ENCODE measurements at regions of chr16 and their contacts with region 1.

Region 1: GRCh38 chr16:66406534-66407221 is 20.4 kb upstream of the BEAN1 start:
- DNase-seq: peak; percentile 64
- ATAC-seq: peak; percentile 87
- H3K4me3 ChIP-seq: peak overlapping the region; percentile 67 to 70
- H3K27ac ChIP-seq: peak overlapping the region; percentile 59
- H3K4me1 ChIP-seq: peaks cover 20 to 37% of the 10 kb centered on the region in 2 experiments
- H3K27me3 ChIP-seq: 0 out of 2 replicates have a peak, but pooled peaks cover 3% of the 10 kb centered on the region
- CTCF ChIP-seq: peak; percentile 71 to 93 (median 89)
- POLR2A ChIP-seq: peak; percentile 49
- RAD21 ChIP-seq: peak; percentile 98

Region 2: GRCh38 chr16:66344533-66345145 is 62.0 kb before region 1 on chr16:
- CTCF ChIA-PET with region 1: interaction called, 4 read pairs
- POLR2A ChIA-PET with region 1: no interaction called
- RAD21 ChIA-PET with region 1: no interaction called
- intact Hi-C with region 1: loop called (anchors 2 kb)
- DNase-seq: no peak
- ATAC-seq: peak; percentile 69
- H3K4me3 ChIP-seq: no peak overlapping the region
- H3K27ac ChIP-seq: no peak overlapping the region
- H3K4me1 ChIP-seq: peaks cover 3 to 11% of the 10 kb centered on the region in 2 experiments; a peak in 3 of 4 replicates
- H3K27me3 ChIP-seq: no peaks in the 10 kb centered on the region
- CTCF ChIP-seq: peak; percentile 54 to 81 (median 62); a peak in 5 of 6 replicates
- POLR2A ChIP-seq: no peak
- RAD21 ChIP-seq: peak; percentile 49

Region 3: DNA sequence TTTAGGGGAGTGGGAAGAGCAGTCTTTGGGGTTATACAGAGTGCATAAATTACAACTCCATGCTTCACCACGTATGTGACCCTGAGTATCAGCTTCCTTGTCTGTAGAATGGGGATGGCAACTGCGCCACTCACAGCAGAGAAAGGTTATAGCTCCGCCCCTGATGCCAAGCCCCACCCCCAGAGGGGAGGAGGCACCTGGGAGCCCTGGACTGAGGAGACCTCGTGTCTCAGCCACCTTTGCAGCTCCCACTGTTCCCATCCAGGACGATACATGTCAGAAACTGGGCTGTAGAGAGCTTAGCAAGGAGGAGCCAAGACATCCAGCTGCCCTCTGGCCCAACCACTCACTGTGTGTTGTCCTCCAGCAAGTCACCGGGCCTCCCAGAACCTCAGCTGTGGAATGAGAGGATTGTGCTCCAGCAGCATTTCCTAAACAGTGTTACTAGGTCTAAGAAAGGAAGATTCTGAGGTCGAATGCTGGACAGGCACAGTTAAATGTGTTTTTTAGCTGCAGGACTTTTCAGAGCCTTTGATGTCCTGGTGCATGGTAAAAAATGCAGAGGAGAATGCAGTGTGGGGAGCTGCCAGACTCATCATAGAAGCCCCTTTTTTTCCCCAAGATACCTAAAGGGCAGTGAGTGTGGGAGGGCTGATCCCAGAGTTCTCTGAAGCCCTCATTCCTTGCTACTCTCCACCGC is 69.8 kb after region 1 on chr16:
- CTCF ChIA-PET with region 1: interaction called, 44 read pairs
- POLR2A ChIA-PET with region 1: interaction called, 10 read pairs
- RAD21 ChIA-PET with region 1: interaction called, 12 to 13 read pairs
- intact Hi-C with region 1: loop called (anchors 1 kb)
- DNase-seq: no peak
- ATAC-seq: peak; percentile 86
- H3K4me3 ChIP-seq: no peak overlapping the region
- H3K27ac ChIP-seq: no peak overlapping the region
- H3K4me1 ChIP-seq: peaks cover 22 to 26% of the 10 kb centered on the region in 2 experiments
- H3K27me3 ChIP-seq: no peaks in the 10 kb centered on the region
- CTCF ChIP-seq: no peak
- POLR2A ChIP-seq: no peak
- RAD21 ChIP-seq: no peak

Region 4: GRCh38 chr16:66511615-66512500 is 105.2 kb after region 1 on chr16:
- CTCF ChIA-PET with region 1: interaction called, 15 read pairs
- POLR2A ChIA-PET with region 1: no interaction called
- RAD21 ChIA-PET with region 1: interaction called, 3 to 5 read pairs
- intact Hi-C with region 1: loop called (anchors 1 kb)
- DNase-seq: peak; percentile 43
- ATAC-seq: peak; percentile 64
- H3K4me3 ChIP-seq: peak overlapping the region in 1 of 2 experiments; percentile 37; a peak in 2 of 4 replicates
- H3K27ac ChIP-seq: peak overlapping the region; percentile 63
- H3K4me1 ChIP-seq: peaks cover 44 to 63% of the 10 kb centered on the region in 2 experiments
- H3K27me3 ChIP-seq: no peaks in the 10 kb centered on the region
- CTCF ChIP-seq: peak in 2 of 3 experiments; percentile 18 to 19; a peak in 2 of 6 replicates
- POLR2A ChIP-seq: no peak
- RAD21 ChIP-seq: peak; percentile 21; the same call in 1 of the 2 replicates

Region 5: GRCh38 chr16:66549284-66550131 is 142.8 kb after region 1 on chr16 and contains the start of gene TK2:
- CTCF ChIA-PET with region 1: interaction called, 5 read pairs
- POLR2A ChIA-PET with region 1: interaction called, 3 read pairs
- RAD21 ChIA-PET with region 1: no interaction called
- intact Hi-C with region 1: loop called (anchors 2 kb)
- DNase-seq: no peak
- ATAC-seq: peak; percentile 66
- H3K4me3 ChIP-seq: peak within 1 kb of the TSS; percentile 61 to 72
- H3K27ac ChIP-seq: peak within 1 kb of the TSS; percentile 88
- H3K4me1 ChIP-seq: peaks cover 25 to 46% of the 10 kb centered on the region in 2 experiments
- H3K27me3 ChIP-seq: no peaks in the 10 kb centered on the region
- CTCF ChIP-seq: peak in 2 of 3 experiments; percentile 13 to 24; a peak in 2 of 6 replicates
- POLR2A ChIP-seq: no peak
- RAD21 ChIP-seq: no peak
- total RNA-seq, gene TK2: 15.4 TPM

Region 6: DNA sequence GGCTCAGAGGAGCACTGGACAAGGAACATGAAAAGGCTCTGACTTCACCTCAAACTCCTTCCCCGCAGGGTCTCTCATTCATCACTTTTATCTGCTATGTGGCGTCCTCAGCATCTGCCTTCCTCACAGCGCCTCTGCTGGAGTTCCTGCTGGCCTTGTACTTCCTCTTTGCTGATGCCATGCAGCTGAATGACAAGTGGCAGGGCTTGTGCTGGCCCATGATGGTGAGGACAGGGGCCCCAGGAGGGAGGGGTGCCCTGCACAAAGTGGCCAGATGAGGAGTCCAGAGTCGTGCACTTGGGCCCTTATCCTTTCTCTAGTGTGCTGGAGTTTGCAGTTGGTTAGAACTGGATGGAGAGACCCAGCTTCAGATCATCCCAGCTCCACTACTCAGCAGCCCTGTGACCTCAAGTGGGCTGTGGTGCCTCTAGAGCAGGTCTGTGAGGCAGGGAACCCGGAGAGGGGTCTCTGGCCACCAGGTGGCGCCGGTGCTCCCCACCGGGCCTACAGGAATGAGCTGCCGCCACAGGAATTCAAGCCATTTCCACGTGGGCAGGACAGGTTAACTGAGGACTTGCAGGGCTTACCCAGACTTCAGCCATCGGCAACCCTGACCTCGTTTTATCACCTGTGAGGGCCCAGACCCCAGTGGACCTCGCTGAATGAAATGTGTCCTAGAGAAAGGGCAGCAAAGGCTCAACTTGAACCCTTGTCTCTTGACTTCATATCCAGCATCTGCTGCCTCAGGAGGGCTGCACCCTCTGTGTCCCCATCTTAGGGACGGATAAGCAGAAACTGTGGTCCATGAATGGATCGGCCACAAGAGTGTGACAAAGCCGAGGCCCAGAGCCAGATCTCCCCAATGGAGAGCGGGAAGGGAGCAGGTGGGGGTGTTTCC is 201.8 kb after region 1 on chr16:
- CTCF ChIA-PET with region 1: interaction called, 13 read pairs
- POLR2A ChIA-PET with region 1: no interaction called
- RAD21 ChIA-PET with region 1: interaction called in 1 of 2 experiments, 3 read pairs
- intact Hi-C with region 1: loop called (anchors 5 kb)
- DNase-seq: peak; percentile 74
- ATAC-seq: peak; percentile 76
- H3K4me3 ChIP-seq: peak overlapping the region in 1 of 2 experiments; percentile 7; a peak in 1 of 4 replicates
- H3K27ac ChIP-seq: peak overlapping the region; percentile 54
- H3K4me1 ChIP-seq: peaks cover 24 to 39% of the 10 kb centered on the region in 2 experiments
- H3K27me3 ChIP-seq: no peaks in the 10 kb centered on the region
- CTCF ChIP-seq: peak; percentile 89 to 97 (median 96)
- POLR2A ChIP-seq: no peak
- RAD21 ChIP-seq: peak; percentile 91

Region 7: DNA sequence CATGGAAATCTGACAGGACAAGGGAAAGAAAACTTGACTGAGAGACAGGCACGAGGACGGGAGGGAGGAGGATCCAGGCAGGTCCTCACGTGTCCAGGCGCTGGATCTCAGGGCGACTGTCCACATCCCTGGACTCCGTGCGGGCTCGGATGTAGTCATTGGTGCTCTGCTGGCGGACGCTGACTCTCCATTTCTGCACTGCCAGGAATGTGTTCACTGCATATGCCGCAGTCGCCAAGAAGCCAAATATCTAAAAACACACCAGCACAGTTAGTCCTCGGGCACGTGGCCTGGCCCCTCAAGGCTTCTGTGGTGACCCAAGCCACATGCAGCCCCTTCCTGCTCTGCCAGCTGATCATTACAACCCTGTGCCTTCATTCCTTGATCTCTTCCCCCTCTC is 215.3 kb after region 1 on chr16:
- CTCF ChIA-PET with region 1: no interaction called
- POLR2A ChIA-PET with region 1: no interaction called
- RAD21 ChIA-PET with region 1: no interaction called
- intact Hi-C with region 1: no loop called
- DNase-seq: no peak
- ATAC-seq: no peak
- H3K4me3 ChIP-seq: no peak overlapping the region
- H3K27ac ChIP-seq: no peak overlapping the region
- H3K4me1 ChIP-seq: peaks cover 23 to 33% of the 10 kb centered on the region in 2 experiments
- H3K27me3 ChIP-seq: no peaks in the 10 kb centered on the region
- CTCF ChIP-seq: no peak
- POLR2A ChIP-seq: no peak
- RAD21 ChIP-seq: no peak

Region 8: DNA sequence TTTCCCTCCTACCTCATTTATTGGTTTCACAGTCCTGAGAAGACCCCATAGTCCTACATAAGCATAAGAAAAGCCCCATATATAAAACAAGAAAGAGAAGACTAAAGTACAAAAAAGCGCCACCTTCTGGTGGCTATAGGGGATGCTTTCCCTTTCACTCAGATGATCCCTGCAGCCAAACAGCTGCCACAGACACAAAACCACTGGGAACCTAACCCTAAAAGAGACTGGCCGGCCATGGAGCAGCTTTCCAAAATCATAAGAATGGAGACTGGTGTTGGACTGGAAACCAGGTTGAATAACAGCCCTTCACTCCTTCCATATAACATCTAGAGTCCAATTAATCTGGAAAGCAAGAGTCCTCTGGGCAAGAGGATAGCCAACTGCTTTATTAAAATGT is 333.3 kb after region 1 on chr16:
- CTCF ChIA-PET with region 1: interaction called, 7 read pairs
- POLR2A ChIA-PET with region 1: no interaction called
- RAD21 ChIA-PET with region 1: no interaction called
- intact Hi-C with region 1: loop called (anchors 5 kb)
- DNase-seq: no peak
- ATAC-seq: peak; percentile 71
- H3K4me3 ChIP-seq: no peak overlapping the region
- H3K27ac ChIP-seq: peak overlapping the region; percentile 34; the same call in 1 of the 2 replicates
- H3K4me1 ChIP-seq: peaks cover 32 to 43% of the 10 kb centered on the region in 2 experiments
- H3K27me3 ChIP-seq: no peaks in the 10 kb centered on the region
- CTCF ChIP-seq: peak; percentile 47 to 84 (median 73); a peak in 5 of 6 replicates
- POLR2A ChIP-seq: no peak
- RAD21 ChIP-seq: peak; percentile 21; the same call in 1 of the 2 replicates